ENCODE measurements at regions of chr11 and their contacts with region 1.

Region 1: DNA sequence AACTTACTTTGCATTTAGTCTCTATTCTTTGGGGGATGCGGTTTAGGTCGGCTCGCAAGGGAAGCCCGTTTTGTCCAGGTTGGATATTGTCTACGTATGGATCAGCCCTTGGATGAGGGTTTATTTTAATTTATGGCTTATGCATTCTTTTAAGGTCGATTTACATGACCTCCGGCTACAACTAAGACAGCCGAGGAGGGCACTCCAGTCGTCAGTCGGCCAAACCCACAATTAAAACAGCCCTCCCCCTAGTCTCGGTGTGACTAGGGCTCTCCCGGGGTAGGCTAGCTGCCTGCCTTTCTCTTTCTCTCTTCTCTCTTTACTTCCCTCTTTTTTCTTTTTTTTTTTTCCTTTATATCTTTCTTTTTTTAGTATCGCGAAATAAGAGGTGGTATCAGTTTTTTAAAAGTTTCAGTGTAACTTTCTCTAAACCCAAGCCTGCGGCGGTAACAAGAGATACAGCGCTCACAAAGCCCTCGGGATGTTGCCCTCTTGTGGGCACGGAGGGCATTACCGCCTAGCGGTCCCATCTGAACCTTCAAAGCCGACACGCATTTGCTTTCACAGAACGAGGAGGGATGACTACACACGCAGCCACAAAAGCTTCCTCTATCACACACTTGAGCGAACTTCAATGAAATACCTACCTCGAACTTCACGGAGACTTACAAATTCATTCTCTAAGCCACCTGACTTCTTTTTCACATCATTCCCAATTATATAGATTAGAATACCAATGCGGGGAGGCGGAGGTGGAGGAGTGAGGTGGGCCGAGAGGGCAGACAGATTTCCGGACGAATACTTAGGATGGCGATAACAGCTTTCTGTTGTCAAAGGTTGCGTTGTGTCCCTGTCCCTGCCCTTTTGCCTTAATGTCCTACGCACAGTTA is 132.3 kb upstream of the C11orf58 start:
- DNase-seq: peak; percentile 91
- H3K4me3 Mint-ChIP-seq: no peak overlapping the region
- H3K27ac Mint-ChIP-seq: no peak overlapping the region
- H3K4me1 Mint-ChIP-seq: no peaks in the 10 kb centered on the region
- H3K27me3 Mint-ChIP-seq: peaks cover under 1% of the 10 kb centered on the region
- CTCF ChIP-seq: peak; percentile 91

Region 2: GRCh38 chr11:15913261-15913660 is 692.9 kb before region 1 on chr11:
- CTCF ChIA-PET with region 1: no interaction called
- POLR2A ChIA-PET with region 1: no interaction called
- intact Hi-C with region 1: loop called (anchors 1 kb)
- DNase-seq: no peak
- H3K4me3 Mint-ChIP-seq: no peak overlapping the region
- H3K27ac Mint-ChIP-seq: no peak overlapping the region
- H3K4me1 Mint-ChIP-seq: peaks cover 6% of the 10 kb centered on the region
- H3K27me3 Mint-ChIP-seq: no peaks in the 10 kb centered on the region
- CTCF ChIP-seq: no peak

Region 3: GRCh38 chr11:16097543-16097942 is 508.6 kb before region 1 on chr11:
- CTCF ChIA-PET with region 1: interaction called, 5 read pairs
- POLR2A ChIA-PET with region 1: interaction called, 88 read pairs
- intact Hi-C with region 1: no loop called
- DNase-seq: peak; percentile 80
- H3K4me3 Mint-ChIP-seq: no peak overlapping the region
- H3K27ac Mint-ChIP-seq: no peak overlapping the region
- H3K4me1 Mint-ChIP-seq: peaks cover 31% of the 10 kb centered on the region
- H3K27me3 Mint-ChIP-seq: no peaks in the 10 kb centered on the region
- CTCF ChIP-seq: no peak

Region 4: DNA sequence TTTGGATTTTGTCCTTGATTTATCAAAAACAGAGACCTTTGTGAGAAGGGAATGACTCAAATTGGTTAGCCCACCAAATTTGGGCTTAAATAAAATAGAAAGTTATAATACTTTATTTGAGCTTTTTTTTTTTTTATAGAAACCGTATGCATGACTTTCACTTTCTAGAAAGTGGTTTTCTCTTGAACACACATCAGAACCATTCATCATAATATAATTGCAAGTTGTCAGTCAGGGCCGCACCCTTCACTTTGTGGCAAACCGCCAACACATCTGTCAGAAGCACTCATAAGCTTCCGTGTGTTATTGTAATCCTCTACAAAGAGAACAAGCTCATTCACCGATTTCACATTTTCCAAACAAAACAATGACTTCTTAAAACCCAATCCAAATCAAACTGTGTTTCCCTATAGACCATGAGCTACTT is 325.9 kb before region 1 on chr11:
- CTCF ChIA-PET with region 1: interaction called, 6 read pairs
- POLR2A ChIA-PET with region 1: interaction called, 64 read pairs
- intact Hi-C with region 1: loop called (anchors 1 kb)
- DNase-seq: peak; percentile 95
- H3K4me3 Mint-ChIP-seq: peak overlapping the region; percentile 70
- H3K27ac Mint-ChIP-seq: peak overlapping the region; percentile 78
- H3K4me1 Mint-ChIP-seq: peaks cover 22% of the 10 kb centered on the region
- H3K27me3 Mint-ChIP-seq: no peaks in the 10 kb centered on the region
- CTCF ChIP-seq: no peak

Region 5: GRCh38 chr11:16511116-16512114 is 94.7 kb before region 1 on chr11:
- CTCF ChIA-PET with region 1: interaction called, 3 read pairs
- POLR2A ChIA-PET with region 1: interaction called, 17 read pairs
- intact Hi-C with region 1: loop called (anchors 1 kb)
- DNase-seq: peak; percentile 72
- H3K4me3 Mint-ChIP-seq: no peak overlapping the region
- H3K27ac Mint-ChIP-seq: peak overlapping the region; percentile 72
- H3K4me1 Mint-ChIP-seq: peaks cover 19% of the 10 kb centered on the region
- H3K27me3 Mint-ChIP-seq: no peaks in the 10 kb centered on the region
- CTCF ChIP-seq: no peak